MCF 10A (cell line): ENCODE measurements at regions of chr5 and their contacts with region 1.

Region 1: GRCh38 chr5:54492178-54492577 is 25.4 kb upstream of the SNX18 start:
- DNase-seq: no peak
- H3K4me3 Mint-ChIP-seq: no peak overlapping the region
- H3K27ac Mint-ChIP-seq: no peak overlapping the region
- H3K4me1 Mint-ChIP-seq: no peaks in the 10 kb centered on the region
- H3K27me3 Mint-ChIP-seq: no peaks in the 10 kb centered on the region
- CTCF ChIP-seq: no peak

Region 2: GRCh38 chr5:54229041-54229780 is 263.0 kb before region 1 on chr5:
- CTCF ChIA-PET with region 1: interaction called, 20 read pairs
- POLR2A ChIA-PET with region 1: no interaction called
- intact Hi-C with region 1: no loop called
- DNase-seq: peak; percentile 67
- H3K4me3 Mint-ChIP-seq: no peak overlapping the region
- H3K27ac Mint-ChIP-seq: no peak overlapping the region
- H3K4me1 Mint-ChIP-seq: peaks cover 6% of the 10 kb centered on the region
- H3K27me3 Mint-ChIP-seq: no peaks in the 10 kb centered on the region
- CTCF ChIP-seq: peak; percentile 74

Region 3: GRCh38 chr5:54254482-54255198 is 237.5 kb before region 1 on chr5:
- CTCF ChIA-PET with region 1: interaction called, 134 read pairs
- POLR2A ChIA-PET with region 1: interaction called, 3 read pairs
- intact Hi-C with region 1: no loop called
- DNase-seq: peak; percentile 14
- H3K4me3 Mint-ChIP-seq: no peak overlapping the region
- H3K27ac Mint-ChIP-seq: no peak overlapping the region
- H3K4me1 Mint-ChIP-seq: no peaks in the 10 kb centered on the region
- H3K27me3 Mint-ChIP-seq: no peaks in the 10 kb centered on the region
- CTCF ChIP-seq: no peak

Region 4: DNA sequence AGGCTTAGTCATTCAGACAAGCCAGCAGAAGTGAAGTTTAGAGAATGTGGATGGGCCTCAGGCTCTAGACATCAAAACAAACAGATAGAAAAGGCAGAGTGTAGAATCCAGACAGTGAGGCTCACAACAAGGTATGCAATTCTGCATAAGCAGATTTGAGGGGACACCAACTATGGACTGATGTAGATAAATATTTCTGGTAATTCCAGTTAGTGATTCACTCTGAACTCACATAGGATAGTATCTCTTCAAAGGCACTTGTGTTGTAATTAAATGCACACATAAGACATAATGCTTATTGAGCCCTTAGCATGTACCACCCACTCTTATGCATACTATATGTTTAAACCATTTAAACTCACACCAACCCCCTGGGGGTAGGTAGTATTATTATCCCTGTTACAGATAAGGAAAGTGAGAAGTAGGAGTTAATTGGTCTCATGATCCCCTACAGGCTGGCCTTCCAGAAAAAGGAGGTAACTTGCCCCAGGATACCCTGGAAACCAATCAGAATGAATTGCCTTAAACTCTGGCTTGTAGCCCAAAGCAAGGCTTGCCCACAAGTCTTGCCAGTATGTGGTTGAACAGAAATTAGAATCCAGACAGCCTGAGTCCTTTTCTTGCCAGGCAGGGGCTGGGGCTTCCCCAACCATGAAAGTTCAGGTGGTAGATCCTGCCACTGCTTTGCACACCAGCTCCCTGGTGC is 76.1 kb before region 1 on chr5:
- CTCF ChIA-PET with region 1: interaction called, 21 read pairs
- POLR2A ChIA-PET with region 1: interaction called, 6 read pairs
- intact Hi-C with region 1: loop called (anchors 2 kb)
- DNase-seq: peak; percentile 26
- H3K4me3 Mint-ChIP-seq: no peak overlapping the region
- H3K27ac Mint-ChIP-seq: no peak overlapping the region
- H3K4me1 Mint-ChIP-seq: peaks cover 14% of the 10 kb centered on the region
- H3K27me3 Mint-ChIP-seq: no peaks in the 10 kb centered on the region
- CTCF ChIP-seq: no peak

Region 5: GRCh38 chr5:54457094-54457862 is 34.9 kb before region 1 on chr5:
- CTCF ChIA-PET with region 1: interaction called, 56 read pairs
- POLR2A ChIA-PET with region 1: interaction called, 7 read pairs
- intact Hi-C with region 1: no loop called
- DNase-seq: peak; percentile 60
- H3K4me3 Mint-ChIP-seq: no peak overlapping the region
- H3K27ac Mint-ChIP-seq: no peak overlapping the region
- H3K4me1 Mint-ChIP-seq: peaks cover 9% of the 10 kb centered on the region
- H3K27me3 Mint-ChIP-seq: no peaks in the 10 kb centered on the region
- CTCF ChIP-seq: no peak

Region 6: DNA sequence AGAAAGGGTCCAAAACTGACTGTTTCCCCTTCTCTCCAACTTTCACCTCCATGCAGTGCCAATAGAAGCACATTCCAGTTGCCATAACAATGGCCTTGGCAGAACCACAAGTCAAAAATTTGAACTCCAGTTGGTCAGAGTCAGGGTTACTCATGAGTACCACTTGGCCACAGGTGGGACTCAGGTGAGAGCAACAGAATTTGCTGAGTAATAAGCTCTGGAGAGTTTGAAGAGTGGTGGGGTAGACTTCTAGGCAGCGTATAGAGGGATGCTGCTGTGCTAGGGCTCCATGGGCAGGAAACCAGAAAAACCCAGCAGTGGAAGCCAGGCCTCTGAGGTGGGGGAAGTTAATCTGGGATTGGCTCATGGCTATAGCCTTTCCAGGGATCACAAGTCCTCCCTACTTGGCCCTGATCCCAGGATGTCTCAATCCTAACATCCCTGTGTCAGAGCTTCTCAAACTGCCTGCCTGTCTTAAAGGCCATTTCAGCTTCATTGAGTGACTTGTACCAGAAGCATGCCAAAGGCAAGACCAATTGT is 55.6 kb after region 1 on chr5:
- CTCF ChIA-PET with region 1: no interaction called
- POLR2A ChIA-PET with region 1: no interaction called
- intact Hi-C with region 1: no loop called
- DNase-seq: peak; percentile 90
- H3K4me3 Mint-ChIP-seq: no peak overlapping the region
- H3K27ac Mint-ChIP-seq: no peak overlapping the region
- H3K4me1 Mint-ChIP-seq: peaks cover 5% of the 10 kb centered on the region
- H3K27me3 Mint-ChIP-seq: no peaks in the 10 kb centered on the region
- CTCF ChIP-seq: no peak

Region 7: GRCh38 chr5:54895816-54896341 is 403.7 kb after region 1 on chr5:
- CTCF ChIA-PET with region 1: interaction called, 15 read pairs
- POLR2A ChIA-PET with region 1: no interaction called
- intact Hi-C with region 1: no loop called
- DNase-seq: peak; percentile 73
- H3K4me3 Mint-ChIP-seq: no peak overlapping the region
- H3K27ac Mint-ChIP-seq: peak overlapping the region; percentile 29
- H3K4me1 Mint-ChIP-seq: peaks cover 5% of the 10 kb centered on the region
- H3K27me3 Mint-ChIP-seq: peaks cover 40% of the 10 kb centered on the region
- CTCF ChIP-seq: peak; percentile 65